Activated CD4-positive, alpha-beta T cell treated with anti-CD3 and anti-CD28 coated beads for 36 hours (primary cell): ENCODE measurements at regions of chr1 and their contacts with region 1.

Region 1: GRCh38 chr1:1115786-1116700 is at the start of gene C1orf159:
- DNase-seq: peak; percentile 99
- ATAC-seq: peak; percentile 96
- H3K4me3 Mint-ChIP-seq: peak within 1 kb of the TSS; percentile 76
- H3K27ac Mint-ChIP-seq: peak within 1 kb of the TSS; percentile 25
- H3K4me1 Mint-ChIP-seq: peaks cover 11% of the 10 kb centered on the region
- H3K27me3 Mint-ChIP-seq: peaks cover 3% of the 10 kb centered on the region
- total RNA-seq, gene C1orf159: 11.3 to 13.5 TPM

Region 2: GRCh38 chr1:1033009-1033587 is 82.9 kb before region 1 on chr1:
- CTCF ChIA-PET with region 1: no interaction called
- POLR2A ChIA-PET with region 1: no interaction called
- intact Hi-C with region 1: loop called (anchors 1 kb)
- DNase-seq: peak; percentile 97
- ATAC-seq: peak; percentile 95
- H3K4me3 Mint-ChIP-seq: peak overlapping the region; percentile 33
- H3K27ac Mint-ChIP-seq: no peak overlapping the region
- H3K4me1 Mint-ChIP-seq: peaks cover 5% of the 10 kb centered on the region
- H3K27me3 Mint-ChIP-seq: peaks cover 18% of the 10 kb centered on the region

Region 3: GRCh38 chr1:1157426-1157913 is 41.4 kb after region 1 on chr1:
- CTCF ChIA-PET with region 1: no interaction called
- POLR2A ChIA-PET with region 1: no interaction called
- intact Hi-C with region 1: loop called in 1 of 2 experiments (anchors 1 kb)
- DNase-seq: peak; percentile 81
- ATAC-seq: peak; percentile 86
- H3K4me3 Mint-ChIP-seq: peak overlapping the region; percentile 69
- H3K27ac Mint-ChIP-seq: peak overlapping the region; percentile 47
- H3K4me1 Mint-ChIP-seq: no peaks in the 10 kb centered on the region
- H3K27me3 Mint-ChIP-seq: no peaks in the 10 kb centered on the region

Region 4: DNA sequence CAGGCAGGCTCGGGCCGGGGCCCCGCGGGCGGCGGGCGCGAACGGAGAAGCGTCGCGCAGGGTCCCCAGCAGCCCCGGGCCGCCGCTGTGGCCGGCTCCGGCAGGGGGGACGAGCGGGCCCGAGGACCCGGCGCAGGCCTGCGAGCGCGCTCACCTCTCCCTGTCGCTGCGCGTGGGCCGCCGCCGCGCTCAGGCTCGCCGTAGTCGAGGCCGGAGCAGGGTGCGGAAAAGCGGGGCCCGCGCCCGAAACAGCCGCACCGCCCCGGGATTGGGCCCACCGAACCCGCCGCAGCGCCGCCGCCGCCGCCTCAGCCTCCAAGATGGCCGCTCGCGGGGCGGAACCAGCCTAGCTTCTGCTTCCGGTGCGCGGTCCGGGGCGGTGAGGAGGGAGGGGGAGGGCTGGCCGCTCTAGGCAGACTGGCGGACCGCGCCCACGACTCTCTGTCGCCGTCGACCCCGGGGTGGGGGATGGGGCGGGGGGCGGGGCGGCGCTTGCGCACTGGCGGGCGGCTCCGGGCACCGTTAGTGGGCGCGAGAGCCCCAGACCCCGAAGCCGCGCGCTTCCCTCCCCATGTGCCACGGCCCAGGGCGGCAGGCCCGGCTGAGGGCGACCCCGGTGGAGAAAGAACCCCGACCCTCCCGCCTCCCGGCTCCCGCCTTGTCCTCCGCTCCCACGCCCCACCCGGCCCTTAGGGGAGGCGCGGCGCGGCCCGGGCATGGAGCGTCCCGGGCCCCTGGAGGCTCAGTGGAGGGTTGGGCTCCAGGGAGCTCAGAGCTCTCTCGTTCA is 157.7 kb after region 1 on chr1 and contains the start of gene UBE2J2:
- CTCF ChIA-PET with region 1: no interaction called
- POLR2A ChIA-PET with region 1: interaction called, 4 read pairs
- intact Hi-C with region 1: loop called (anchors 1 to 5 kb)
- DNase-seq: peak; percentile 97
- ATAC-seq: peak; percentile 94
- H3K4me3 Mint-ChIP-seq: peak within 1 kb of the TSS; percentile 85
- H3K27ac Mint-ChIP-seq: peak within 1 kb of the TSS; percentile 83
- H3K4me1 Mint-ChIP-seq: peaks cover 36% of the 10 kb centered on the region
- H3K27me3 Mint-ChIP-seq: no peaks in the 10 kb centered on the region
- total RNA-seq, gene UBE2J2: 57.4 to 60.2 TPM

Region 5: GRCh38 chr1:1374929-1375662 is 259.1 kb after region 1 on chr1 and contains the start of gene AURKAIP1:
- CTCF ChIA-PET with region 1: no interaction called
- POLR2A ChIA-PET with region 1: no interaction called
- intact Hi-C with region 1: loop called in 1 of 2 experiments (anchors 1 kb)
- DNase-seq: peak; percentile 98
- ATAC-seq: peak; percentile 97
- H3K4me3 Mint-ChIP-seq: peak within 1 kb of the TSS; percentile 87
- H3K27ac Mint-ChIP-seq: peak within 1 kb of the TSS; percentile 91
- H3K4me1 Mint-ChIP-seq: peaks cover 26% of the 10 kb centered on the region
- H3K27me3 Mint-ChIP-seq: no peaks in the 10 kb centered on the region
- total RNA-seq, gene AURKAIP1: 89.5 to 117 TPM

Region 6: GRCh38 chr1:1615256-1616044 is 499.4 kb after region 1 on chr1 and contains the start of gene MIB2:
- CTCF ChIA-PET with region 1: no interaction called
- POLR2A ChIA-PET with region 1: no interaction called
- intact Hi-C with region 1: loop called in 1 of 2 experiments (anchors 1 kb)
- DNase-seq: peak; percentile 98
- ATAC-seq: peak; percentile 84
- H3K4me3 Mint-ChIP-seq: peak within 1 kb of the TSS; percentile 96
- H3K27ac Mint-ChIP-seq: peak within 1 kb of the TSS; percentile 95
- H3K4me1 Mint-ChIP-seq: peaks cover 24% of the 10 kb centered on the region
- H3K27me3 Mint-ChIP-seq: no peaks in the 10 kb centered on the region
- total RNA-seq, gene MIB2: 37.1 TPM